ENCODE measurements at regions of chr20 and their contacts with region 1.

Region 1: DNA sequence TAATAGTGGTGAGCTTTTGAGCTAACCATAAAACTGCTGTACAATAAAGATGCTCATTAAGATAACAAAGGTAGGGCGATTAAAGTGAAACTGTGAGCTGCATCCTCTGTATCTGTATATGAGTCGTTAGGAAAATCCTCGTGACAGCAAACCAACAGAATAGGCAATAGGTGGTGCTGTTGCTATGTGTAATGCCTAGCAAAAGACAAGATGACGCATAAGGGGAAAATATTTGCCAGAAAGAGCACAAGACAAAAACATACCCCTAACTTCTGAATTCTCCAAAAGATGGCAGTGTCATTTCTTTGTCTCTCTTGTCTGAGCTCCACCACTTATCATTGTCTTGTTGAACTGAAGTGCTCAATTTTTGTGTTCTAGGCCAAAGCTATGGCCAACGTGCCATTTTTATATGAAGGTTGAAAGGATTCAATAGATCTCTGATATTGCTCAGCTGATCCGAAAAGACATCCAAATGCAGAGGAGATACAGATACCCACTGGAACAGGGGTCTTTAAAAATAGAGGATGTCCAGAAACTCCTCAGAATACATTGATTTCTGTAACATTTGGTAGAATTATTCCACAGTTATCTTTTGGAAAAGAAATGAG is 56.3 kb upstream of the ANKEF1 start:
- DNase-seq: peak; percentile 86
- H3K4me3 ChIP-seq: peak overlapping the region in 2 of 3 experiments; percentile 25 to 38
- H3K27ac ChIP-seq: peak overlapping the region; percentile 42
- H3K4me1 ChIP-seq: peaks cover 7% of the 10 kb centered on the region
- H3K27me3 ChIP-seq: no peaks in the 10 kb centered on the region
- CTCF ChIP-seq: peak; percentile 80 to 81

Region 2: GRCh38 chr20:9573335-9574121 is 405.0 kb before region 1 on chr20:
- CTCF ChIA-PET with region 1: no interaction called
- dilution Hi-C with region 1: no loop called
- in situ Hi-C with region 1: no loop called
- intact Hi-C with region 1: no loop called
- DNase-seq: no peak
- H3K4me3 ChIP-seq: no peak overlapping the region
- H3K27ac ChIP-seq: no peak overlapping the region
- H3K4me1 ChIP-seq: no peaks in the 10 kb centered on the region
- H3K27me3 ChIP-seq: no peaks in the 10 kb centered on the region
- CTCF ChIP-seq: no peak

Region 3: GRCh38 chr20:9616833-9617489 is 361.5 kb before region 1 on chr20:
- CTCF ChIA-PET with region 1: interaction called, 8 read pairs
- dilution Hi-C with region 1: no loop called
- in situ Hi-C with region 1: loop called in 1 of 2 experiments (anchors 10 kb)
- intact Hi-C with region 1: loop called (anchors 2 kb)
- DNase-seq: peak; percentile 38
- H3K4me3 ChIP-seq: no peak overlapping the region
- H3K27ac ChIP-seq: no peak overlapping the region
- H3K4me1 ChIP-seq: no peaks in the 10 kb centered on the region
- H3K27me3 ChIP-seq: peaks cover 2% of the 10 kb centered on the region
- CTCF ChIP-seq: peak; percentile 76 to 81

Region 4: GRCh38 chr20:9955646-9956045 is 22.9 kb before region 1 on chr20:
- CTCF ChIA-PET with region 1: no interaction called
- dilution Hi-C with region 1: no loop called
- in situ Hi-C with region 1: no loop called
- intact Hi-C with region 1: no loop called
- DNase-seq: peak; percentile 73
- H3K4me3 ChIP-seq: no peak overlapping the region
- H3K27ac ChIP-seq: no peak overlapping the region
- H3K4me1 ChIP-seq: peaks cover 9% of the 10 kb centered on the region
- H3K27me3 ChIP-seq: no peaks in the 10 kb centered on the region
- CTCF ChIP-seq: no peak

Region 5: DNA sequence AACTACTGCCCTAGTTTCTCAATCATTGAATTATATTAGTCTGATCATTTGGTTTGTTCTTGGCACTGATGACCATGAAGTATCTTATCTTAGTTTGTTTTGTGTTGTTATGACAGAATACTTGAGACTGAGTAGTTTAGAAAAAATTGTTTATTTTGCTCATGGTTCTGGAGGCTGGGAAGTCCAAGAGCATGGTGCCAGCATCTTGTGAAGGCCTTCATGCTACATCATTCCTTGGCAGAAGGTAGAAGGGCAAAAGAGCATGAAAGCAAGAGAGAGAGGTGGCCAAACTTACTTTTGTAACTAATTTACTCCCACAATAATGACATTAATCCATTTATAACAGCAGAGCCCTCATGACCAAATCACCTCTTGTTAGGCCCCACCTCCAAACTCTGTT is 16.2 kb after region 1 on chr20:
- CTCF ChIA-PET with region 1: no interaction called
- dilution Hi-C with region 1: no loop called
- in situ Hi-C with region 1: no loop called
- intact Hi-C with region 1: no loop called
- DNase-seq: no peak
- H3K4me3 ChIP-seq: no peak overlapping the region
- H3K27ac ChIP-seq: no peak overlapping the region
- H3K4me1 ChIP-seq: peaks cover 1% of the 10 kb centered on the region
- H3K27me3 ChIP-seq: no peaks in the 10 kb centered on the region
- CTCF ChIP-seq: no peak

Region 6: GRCh38 chr20:10219452-10219791 is 240.9 kb after region 1 on chr20:
- CTCF ChIA-PET with region 1: no interaction called
- dilution Hi-C with region 1: no loop called
- in situ Hi-C with region 1: no loop called
- intact Hi-C with region 1: loop called (anchors 2 kb)
- DNase-seq: peak; percentile 29
- H3K4me3 ChIP-seq: no peak overlapping the region
- H3K27ac ChIP-seq: no peak overlapping the region
- H3K4me1 ChIP-seq: peaks cover 12% of the 10 kb centered on the region
- H3K27me3 ChIP-seq: peaks cover 6% of the 10 kb centered on the region
- CTCF ChIP-seq: no peak

Region 7: DNA sequence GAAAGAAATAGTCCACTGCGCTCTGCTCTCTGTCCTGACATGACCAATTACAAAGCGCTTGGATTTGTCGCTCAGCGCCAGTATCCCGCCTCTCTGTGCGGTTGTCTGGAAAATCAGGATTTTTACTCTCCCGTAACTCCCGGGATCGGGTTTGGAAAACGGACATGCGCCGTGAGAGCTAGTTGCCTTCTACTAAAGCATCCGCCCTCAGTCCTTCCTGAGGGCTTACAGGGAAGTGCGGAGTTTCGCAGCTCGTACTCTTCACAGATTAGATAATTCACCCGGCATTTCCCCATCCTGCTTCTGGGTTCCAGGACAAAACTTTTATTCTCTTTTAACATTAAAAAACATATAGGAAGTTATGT is 455.9 kb after region 1 on chr20:
- CTCF ChIA-PET with region 1: no interaction called
- dilution Hi-C with region 1: no loop called
- in situ Hi-C with region 1: loop called in 1 of 2 experiments (anchors 10 kb)
- intact Hi-C with region 1: loop called (anchors 2 kb)
- DNase-seq: peak; percentile 99
- H3K4me3 ChIP-seq: peak overlapping the region; percentile 76 to 92 (median 87)
- H3K27ac ChIP-seq: peak overlapping the region; percentile 89
- H3K4me1 ChIP-seq: peaks cover 21% of the 10 kb centered on the region
- H3K27me3 ChIP-seq: no peaks in the 10 kb centered on the region
- CTCF ChIP-seq: no peak

Region 8: DNA sequence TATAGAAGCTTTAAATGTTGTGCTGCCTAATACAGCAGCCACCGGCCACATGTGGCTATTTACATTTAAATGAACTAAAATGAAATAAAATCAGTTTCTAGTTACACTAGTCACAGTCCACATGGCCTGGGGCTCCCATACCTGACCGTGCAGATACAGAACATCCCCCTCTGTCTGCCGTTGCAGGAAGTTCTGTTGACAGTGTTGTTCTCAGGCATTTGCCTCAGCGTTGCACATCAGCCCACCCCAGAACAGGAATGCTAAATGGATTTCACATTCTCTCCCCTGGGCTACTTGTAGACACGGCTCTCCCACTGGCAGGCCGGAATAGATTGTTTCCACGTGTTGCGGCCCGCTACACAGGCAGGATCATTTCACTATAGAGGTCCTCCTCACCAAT is 669.0 kb after region 1 on chr20:
- CTCF ChIA-PET with region 1: no interaction called
- dilution Hi-C with region 1: no loop called
- in situ Hi-C with region 1: loop called in 1 of 2 experiments (anchors 25 kb)
- intact Hi-C with region 1: loop called (anchors 5 kb)
- DNase-seq: no peak
- H3K4me3 ChIP-seq: no peak overlapping the region
- H3K27ac ChIP-seq: no peak overlapping the region
- H3K4me1 ChIP-seq: peaks cover 4% of the 10 kb centered on the region
- H3K27me3 ChIP-seq: no peaks in the 10 kb centered on the region
- CTCF ChIP-seq: peak; percentile 26 to 42